Naive thymus-derived CD4-positive, alpha-beta T cell (primary cell): ENCODE measurements at regions of chr6 and their contacts with region 1.

Region 1: GRCh38 chr6:20564269-20564668 is 30.0 kb downstream of the CDKAL1 start:
- DNase-seq: peak in 5 of 9 donors; percentile 25 to 38 (median 36)
- ATAC-seq: no peak
- H3K4me3 ChIP-seq: no peak overlapping the region
- H3K4me3 Mint-ChIP-seq: no peak overlapping the region
- H3K27ac ChIP-seq: no peak overlapping the region
- H3K27ac Mint-ChIP-seq: no peak overlapping the region
- H3K4me1 ChIP-seq: no peaks in the 10 kb centered on the region
- H3K4me1 Mint-ChIP-seq: peaks cover 5 to 20% (median 10%) of the 10 kb centered on the region in 7 donors
- H3K27me3 ChIP-seq: no peaks in the 10 kb centered on the region
- H3K27me3 Mint-ChIP-seq: no peaks in the 10 kb centered on the region

Region 2: GRCh38 chr6:20252311-20252710 is 312.0 kb before region 1 on chr6:
- CTCF ChIA-PET with region 1: no interaction called
- POLR2A ChIA-PET with region 1: no interaction called
- intact Hi-C with region 1: no loop called
- DNase-seq: no peak
- ATAC-seq: no peak
- H3K4me3 ChIP-seq: no peak overlapping the region
- H3K4me3 Mint-ChIP-seq: no peak overlapping the region
- H3K27ac ChIP-seq: no peak overlapping the region
- H3K27ac Mint-ChIP-seq: no peak overlapping the region
- H3K4me1 ChIP-seq: no peaks in the 10 kb centered on the region
- H3K4me1 Mint-ChIP-seq: no peaks in the 10 kb centered on the region
- H3K27me3 ChIP-seq: no peaks in the 10 kb centered on the region
- H3K27me3 Mint-ChIP-seq: peaks cover 0 to 14% (median 0%) of the 10 kb centered on the region in 5 donors

Region 3: GRCh38 chr6:21164768-21165326 is 600.6 kb after region 1 on chr6:
- CTCF ChIA-PET with region 1: no interaction called
- POLR2A ChIA-PET with region 1: no interaction called
- intact Hi-C with region 1: loop called in 1 of 2 experiments (anchors 10 kb)
- DNase-seq: no peak
- ATAC-seq: no peak
- H3K4me3 ChIP-seq: no peak overlapping the region
- H3K4me3 Mint-ChIP-seq: peak overlapping the region in 1 of 10 donors; percentile 39
- H3K27ac ChIP-seq: no peak overlapping the region
- H3K27ac Mint-ChIP-seq: peak overlapping the region in 3 of 9 donors; percentile 4 to 58 (median 20)
- H3K4me1 ChIP-seq: no peaks in the 10 kb centered on the region
- H3K4me1 Mint-ChIP-seq: peaks cover 12 to 37% (median 16%) of the 10 kb centered on the region in 7 donors
- H3K27me3 ChIP-seq: no peaks in the 10 kb centered on the region
- H3K27me3 Mint-ChIP-seq: no peaks in the 10 kb centered on the region

Region 4: GRCh38 chr6:21935561-21936028 is 1371.3 kb after region 1 on chr6:
- CTCF ChIA-PET with region 1: no interaction called
- POLR2A ChIA-PET with region 1: no interaction called
- intact Hi-C with region 1: loop called in 1 of 2 experiments (anchors 10 kb)
- DNase-seq: no peak
- ATAC-seq: no peak
- H3K4me3 ChIP-seq: no peak overlapping the region
- H3K4me3 Mint-ChIP-seq: no peak overlapping the region
- H3K27ac ChIP-seq: no peak overlapping the region
- H3K27ac Mint-ChIP-seq: no peak overlapping the region
- H3K4me1 ChIP-seq: no peaks in the 10 kb centered on the region
- H3K4me1 Mint-ChIP-seq: no peaks in the 10 kb centered on the region
- H3K27me3 ChIP-seq: no peaks in the 10 kb centered on the region
- H3K27me3 Mint-ChIP-seq: peaks cover 0 to 5% (median 0%) of the 10 kb centered on the region in 5 donors